ENCODE measurements at regions of chr7 and their contacts with region 1.

Region 1: GRCh38 chr7:27150568-27151340 is 1.6 kb downstream of the HOXA3 start:
- DNase-seq: peak; percentile 95
- H3K4me3 ChIP-seq: peak overlapping the region; percentile 89
- H3K27ac ChIP-seq: peak overlapping the region; percentile 86
- H3K4me1 ChIP-seq: peaks cover 37% of the 10 kb centered on the region
- H3K27me3 ChIP-seq: no peaks in the 10 kb centered on the region

Region 2: DNA sequence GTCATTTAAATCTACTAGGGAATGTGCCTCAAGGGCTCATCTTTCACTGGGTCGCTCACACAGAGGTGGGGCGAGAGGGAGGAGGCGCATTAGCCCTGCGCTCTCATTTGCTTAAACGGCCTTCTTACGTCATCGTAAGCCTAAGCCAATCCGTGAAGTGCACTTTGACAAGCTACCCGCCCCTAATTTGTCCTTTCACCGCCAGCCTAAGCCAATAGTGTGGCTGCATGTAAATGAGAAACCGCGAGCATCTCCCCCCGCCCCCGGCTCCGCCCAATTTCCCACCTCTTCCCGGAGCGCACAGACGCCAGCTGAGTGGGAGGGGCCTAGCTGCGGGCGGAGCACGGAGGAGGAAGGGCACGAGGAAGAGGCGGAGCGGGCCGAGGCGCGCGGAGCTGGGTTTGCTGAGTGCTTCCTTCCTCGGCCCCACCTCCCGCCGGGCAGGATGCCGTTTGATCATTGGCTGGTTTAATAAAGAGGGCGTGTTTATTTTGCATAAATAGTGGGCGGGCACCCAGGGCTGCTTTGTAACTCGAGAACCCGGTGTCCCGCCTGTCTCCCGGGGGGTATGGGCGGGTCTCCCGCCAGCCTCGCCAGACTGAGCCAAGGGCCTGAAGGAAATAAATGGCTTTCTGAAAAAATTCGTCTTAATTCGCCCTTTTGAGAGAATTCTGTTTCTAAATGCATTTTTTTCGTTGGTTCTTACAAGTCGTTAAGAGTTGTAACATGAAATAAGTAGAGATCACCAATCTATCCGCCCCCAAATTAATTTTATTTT is 1288.3 kb before region 1 on chr7:
- in situ Hi-C with region 1: loop called (anchors 10 kb)
- DNase-seq: peak; percentile 100
- H3K4me3 ChIP-seq: peak overlapping the region; percentile 80
- H3K27ac ChIP-seq: peak overlapping the region; percentile 70; the same call in 1 of the 2 replicates
- H3K4me1 ChIP-seq: 0 out of 2 replicates have a peak, but pooled peaks cover 4% of the 10 kb centered on the region
- H3K27me3 ChIP-seq: peaks cover 44% of the 10 kb centered on the region

Region 3: DNA sequence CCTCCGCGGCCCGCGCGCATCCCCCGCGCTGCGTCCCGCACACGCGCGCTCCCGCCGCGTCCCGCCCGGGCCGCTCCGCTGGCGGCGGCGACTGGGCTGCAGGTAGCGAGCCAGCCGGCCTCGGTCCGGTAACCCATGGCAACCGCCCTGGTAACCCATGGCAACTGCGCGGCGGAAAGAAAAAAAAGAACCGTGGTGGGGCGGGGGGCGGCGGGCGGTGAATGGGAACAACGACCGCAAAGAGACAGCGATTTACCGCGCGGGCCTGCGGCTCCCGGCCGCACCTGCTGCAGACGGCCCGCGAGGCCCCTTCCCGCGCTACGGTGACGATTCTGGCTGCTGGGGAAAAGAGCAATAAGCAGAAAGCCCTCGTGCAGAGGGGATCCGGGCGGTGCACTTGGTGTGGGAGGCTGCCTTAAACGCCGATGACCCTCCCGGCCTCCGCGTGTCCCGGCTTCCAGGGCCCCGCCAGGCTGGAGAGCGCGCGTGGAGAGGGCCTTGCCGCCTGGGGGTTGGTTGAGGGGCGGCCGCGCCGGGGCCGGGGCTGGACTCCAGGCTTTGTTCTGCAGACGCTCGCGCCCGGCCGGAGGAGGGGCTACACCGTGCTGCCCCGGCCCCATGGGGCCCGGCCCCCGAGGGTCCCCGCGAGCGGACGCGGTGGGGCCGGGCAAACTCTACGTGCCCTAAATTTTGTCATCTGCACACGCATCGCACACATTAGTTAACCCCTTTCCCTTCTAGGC is 774.4 kb before region 1 on chr7:
- in situ Hi-C with region 1: loop called (anchors 10 kb)
- DNase-seq: peak; percentile 27
- H3K4me3 ChIP-seq: peak overlapping the region; percentile 55
- H3K27ac ChIP-seq: no peak overlapping the region
- H3K4me1 ChIP-seq: no peaks in the 10 kb centered on the region
- H3K27me3 ChIP-seq: peaks cover 87% of the 10 kb centered on the region

Region 4: GRCh38 chr7:26853788-26854393 is 296.9 kb before region 1 on chr7:
- in situ Hi-C with region 1: loop called (anchors 10 kb)
- DNase-seq: peak; percentile 74
- H3K4me3 ChIP-seq: no peak overlapping the region
- H3K27ac ChIP-seq: no peak overlapping the region
- H3K4me1 ChIP-seq: peaks cover 13% of the 10 kb centered on the region; the same call in 1 of the 2 replicates
- H3K27me3 ChIP-seq: no peaks in the 10 kb centered on the region

Region 5: GRCh38 chr7:27453702-27454405 is 303.1 kb after region 1 on chr7:
- in situ Hi-C with region 1: no loop called
- DNase-seq: peak; percentile 73
- H3K4me3 ChIP-seq: 0 out of 2 replicates have a peak overlapping the region, but pooled peaks have one; percentile 13
- H3K27ac ChIP-seq: peak overlapping the region; percentile 36
- H3K4me1 ChIP-seq: peaks cover 10% of the 10 kb centered on the region
- H3K27me3 ChIP-seq: no peaks in the 10 kb centered on the region

Measured in GM23248 (cell line).